Common myeloid progenitor, CD34-positive (primary cell): ENCODE measurements at regions of chr19 and their contacts with region 1.

Region 1: DNA sequence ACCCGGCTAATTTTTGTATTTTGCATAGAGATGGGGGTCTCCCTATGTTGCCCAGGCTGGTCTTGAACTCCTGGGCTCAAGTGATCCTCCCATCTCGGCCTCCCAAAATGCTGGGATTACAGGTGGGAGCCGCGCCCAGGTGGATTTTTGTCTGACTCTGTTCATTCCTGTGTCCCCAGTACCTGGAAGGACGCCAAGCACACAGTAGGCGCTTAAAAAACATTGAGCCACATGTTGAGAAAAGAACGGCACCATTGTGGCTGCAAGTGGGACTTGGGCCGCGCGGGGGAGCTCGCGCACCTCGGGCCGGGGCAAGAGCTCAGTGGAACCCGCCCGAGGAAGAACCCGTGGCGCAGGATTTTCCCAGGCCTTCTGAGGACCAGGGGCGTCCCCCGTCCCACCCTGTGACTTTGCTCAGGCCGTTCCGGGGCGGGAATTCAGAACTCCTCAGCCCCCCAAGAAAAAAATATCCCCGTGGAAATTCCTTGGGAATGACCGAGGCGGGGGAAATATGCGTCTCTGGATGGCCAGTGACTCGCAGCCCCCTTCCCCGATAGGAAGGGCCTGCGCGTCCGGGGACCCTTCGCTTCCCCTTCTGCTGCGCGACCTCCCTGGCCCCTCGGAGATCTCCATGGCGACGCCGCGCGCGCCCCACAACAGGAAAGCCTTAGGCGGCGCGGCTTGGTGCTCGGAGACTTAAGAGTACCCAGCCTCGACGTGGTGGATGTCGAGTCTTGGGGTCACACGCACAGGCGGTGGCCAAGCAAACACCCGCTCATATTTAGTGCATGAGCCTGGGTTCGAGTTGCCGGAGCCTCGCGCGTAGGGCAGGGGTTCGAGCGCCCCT is 1.4 kb upstream of the ICAM1 start:
- DNase-seq: peak; percentile 84 to 94 (median 91)
- H3K4me3 ChIP-seq: peak overlapping the region in 6 of 7 experiments; percentile 25 to 73 (median 61)
- H3K27ac ChIP-seq: peak overlapping the region in 1 of 2 experiments; percentile 83
- H3K4me1 ChIP-seq: peaks cover 0 to 35% (median 28%) of the 10 kb centered on the region in 4 experiments
- H3K27me3 ChIP-seq: no peaks in the 10 kb centered on the region

Region 2: GRCh38 chr19:10120538-10121189 is 148.9 kb before region 1 on chr19:
- CTCF ChIA-PET with region 1: no interaction called
- POLR2A ChIA-PET with region 1: no interaction called
- DNase-seq: no peak
- H3K4me3 ChIP-seq: no peak overlapping the region
- H3K27ac ChIP-seq: no peak overlapping the region
- H3K4me1 ChIP-seq: peaks cover 0 to 18% (median 10%) of the 10 kb centered on the region in 4 experiments
- H3K27me3 ChIP-seq: no peaks in the 10 kb centered on the region

Region 3: GRCh38 chr19:10194500-10195289 is 74.9 kb before region 1 on chr19 and contains the start of gene DNMT1:
- CTCF ChIA-PET with region 1: no interaction called
- POLR2A ChIA-PET with region 1: no interaction called
- DNase-seq: peak; percentile 96 to 98 (median 98)
- H3K4me3 ChIP-seq: peak within 1 kb of the TSS; percentile 80 to 96 (median 89)
- H3K27ac ChIP-seq: peak within 1 kb of the TSS; percentile 61 to 67
- H3K4me1 ChIP-seq: peaks cover 3 to 21% (median 16%) of the 10 kb centered on the region in 4 experiments
- H3K27me3 ChIP-seq: no peaks in the 10 kb centered on the region

Region 4: GRCh38 chr19:10219678-10220077 is 49.9 kb before region 1 on chr19:
- CTCF ChIA-PET with region 1: no interaction called
- POLR2A ChIA-PET with region 1: no interaction called
- DNase-seq: peak; percentile 53 to 88 (median 86)
- H3K4me3 ChIP-seq: no peak overlapping the region
- H3K27ac ChIP-seq: no peak overlapping the region
- H3K4me1 ChIP-seq: peaks cover 6 to 23% (median 20%) of the 10 kb centered on the region in 4 experiments
- H3K27me3 ChIP-seq: no peaks in the 10 kb centered on the region

Region 5: GRCh38 chr19:10259162-10259905 is 10.2 kb before region 1 on chr19:
- CTCF ChIA-PET with region 1: interaction called, 39 read pairs
- POLR2A ChIA-PET with region 1: interaction called, 6 read pairs
- DNase-seq: peak; percentile 94 to 98 (median 95)
- H3K4me3 ChIP-seq: no peak overlapping the region
- H3K27ac ChIP-seq: no peak overlapping the region
- H3K4me1 ChIP-seq: peaks cover 0 to 12% (median 4%) of the 10 kb centered on the region in 4 experiments
- H3K27me3 ChIP-seq: no peaks in the 10 kb centered on the region

Region 6: GRCh38 chr19:10286803-10287737 is 17.5 kb after region 1 on chr19 and contains the start of gene ICAM4:
- CTCF ChIA-PET with region 1: interaction called, 83 read pairs
- POLR2A ChIA-PET with region 1: interaction called, 60 read pairs
- DNase-seq: peak; percentile 65 to 83 (median 78)
- H3K4me3 ChIP-seq: peak within 1 kb of the TSS in 6 of 7 experiments; percentile 36 to 76 (median 62)
- H3K27ac ChIP-seq: peak within 1 kb of the TSS in 1 of 2 experiments; percentile 73
- H3K4me1 ChIP-seq: peaks cover 0 to 75% (median 71%) of the 10 kb centered on the region in 4 experiments
- H3K27me3 ChIP-seq: peaks cover 0 to 24% (median 21%) of the 10 kb centered on the region in 5 experiments

Region 7: GRCh38 chr19:10299545-10300458 is 30.2 kb after region 1 on chr19:
- CTCF ChIA-PET with region 1: interaction called, 12 read pairs
- POLR2A ChIA-PET with region 1: interaction called, 12 read pairs
- DNase-seq: peak; percentile 80 to 96 (median 94)
- H3K4me3 ChIP-seq: peak overlapping the region in 4 of 7 experiments; percentile 6 to 43 (median 28)
- H3K27ac ChIP-seq: peak overlapping the region; percentile 59 to 82
- H3K4me1 ChIP-seq: peaks cover 5 to 72% (median 56%) of the 10 kb centered on the region in 4 experiments
- H3K27me3 ChIP-seq: peaks cover 0 to 19% (median 11%) of the 10 kb centered on the region in 5 experiments

Region 8: GRCh38 chr19:10388957-10389356 is 119.4 kb after region 1 on chr19:
- CTCF ChIA-PET with region 1: interaction called, 542 read pairs
- POLR2A ChIA-PET with region 1: interaction called, 11 read pairs
- DNase-seq: peak; percentile 71 to 83 (median 75)
- H3K4me3 ChIP-seq: no peak overlapping the region
- H3K27ac ChIP-seq: no peak overlapping the region
- H3K4me1 ChIP-seq: peaks cover 0 to 5% (median 0%) of the 10 kb centered on the region in 4 experiments
- H3K27me3 ChIP-seq: no peaks in the 10 kb centered on the region